MCF 10A (cell line): ENCODE measurements at regions of chr6 and their contacts with region 1.

Region 1: DNA sequence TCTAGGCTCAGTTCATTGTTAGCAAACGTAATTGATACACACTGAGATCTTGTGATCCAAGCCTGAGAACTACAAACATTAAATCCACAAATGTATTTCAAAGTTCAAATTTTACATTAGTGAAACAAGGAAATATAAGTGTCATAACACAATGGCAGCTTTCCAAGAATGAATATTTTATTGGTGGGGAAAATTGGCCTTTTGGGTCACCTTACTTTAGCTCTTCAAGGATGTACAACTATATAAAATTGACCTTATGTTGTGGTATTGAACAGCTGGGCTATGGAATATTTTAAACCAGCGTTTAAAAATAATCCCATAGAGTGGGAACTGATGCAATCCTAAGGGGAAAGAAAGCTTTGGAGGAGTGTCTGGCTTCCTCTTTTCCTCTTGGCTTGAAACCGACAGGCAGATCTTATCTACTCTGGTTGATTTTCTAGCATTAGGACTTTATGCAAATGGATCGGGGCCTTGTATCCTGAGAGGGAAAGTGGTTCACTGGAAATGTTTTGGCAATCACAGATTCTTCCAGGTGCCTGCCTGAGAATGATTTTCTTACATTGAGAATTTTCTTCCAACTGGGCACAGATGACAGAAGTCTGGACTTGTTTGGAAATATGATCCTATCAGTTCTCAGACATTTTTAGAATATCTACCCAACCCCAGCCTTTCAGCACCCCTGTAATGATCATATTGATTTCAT is 184.8 kb upstream of the ECI2 start:
- DNase-seq: peak; percentile 62
- H3K4me3 Mint-ChIP-seq: no peak overlapping the region
- H3K27ac Mint-ChIP-seq: peak overlapping the region; percentile 89
- H3K4me1 Mint-ChIP-seq: peaks cover 49% of the 10 kb centered on the region
- H3K27me3 Mint-ChIP-seq: no peaks in the 10 kb centered on the region
- CTCF ChIP-seq: no peak

Region 2: DNA sequence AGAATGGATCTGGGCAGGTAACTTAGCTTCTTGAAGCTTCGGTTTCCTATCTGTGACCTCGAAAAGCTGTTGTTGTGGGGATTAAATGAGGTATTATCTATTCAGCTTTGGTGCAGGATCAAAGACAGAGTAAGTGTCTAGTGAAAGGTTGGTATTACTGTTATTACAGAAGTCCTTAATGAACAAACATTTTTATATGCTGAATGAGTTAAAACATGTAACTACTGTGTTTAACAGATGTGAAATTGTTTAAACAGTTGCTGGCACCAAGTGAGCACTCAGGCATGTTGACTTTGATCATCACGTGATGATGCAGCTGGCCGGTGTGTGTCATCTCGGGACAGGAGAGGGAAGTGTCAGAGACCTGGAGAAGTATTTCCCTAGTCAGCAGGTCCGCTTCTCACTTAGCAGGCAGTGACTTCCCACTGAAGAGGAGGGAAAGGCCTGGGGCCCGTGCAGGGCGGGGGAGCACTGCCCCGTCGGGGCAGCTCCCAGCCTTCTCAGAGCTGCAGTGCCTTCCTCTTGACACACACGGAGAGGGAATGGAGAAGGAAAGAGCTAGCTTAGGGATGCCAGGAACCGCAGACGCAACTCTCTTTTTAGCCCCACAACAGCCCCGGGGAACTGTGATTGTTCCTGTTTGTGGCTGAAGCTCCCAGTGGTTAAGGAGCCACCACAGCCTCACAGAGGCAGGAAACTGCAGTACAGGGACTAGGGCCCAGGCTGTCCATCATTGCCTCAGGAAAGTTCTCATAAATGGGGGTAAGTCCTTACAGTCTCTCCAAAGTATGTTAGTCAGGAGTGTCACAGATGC is 1180.8 kb before region 1 on chr6:
- CTCF ChIA-PET with region 1: no interaction called
- POLR2A ChIA-PET with region 1: no interaction called
- intact Hi-C with region 1: no loop called
- DNase-seq: peak; percentile 56
- H3K4me3 Mint-ChIP-seq: no peak overlapping the region
- H3K27ac Mint-ChIP-seq: no peak overlapping the region
- H3K4me1 Mint-ChIP-seq: peaks cover 13% of the 10 kb centered on the region
- H3K27me3 Mint-ChIP-seq: no peaks in the 10 kb centered on the region
- CTCF ChIP-seq: no peak

Region 3: GRCh38 chr6:4351520-4352315 is 31.6 kb after region 1 on chr6:
- CTCF ChIA-PET with region 1: interaction called, 6 read pairs
- POLR2A ChIA-PET with region 1: interaction called, 19 read pairs
- intact Hi-C with region 1: no loop called
- DNase-seq: peak; percentile 89
- H3K4me3 Mint-ChIP-seq: peak overlapping the region; percentile 66
- H3K27ac Mint-ChIP-seq: peak overlapping the region; percentile 84
- H3K4me1 Mint-ChIP-seq: peaks cover 42% of the 10 kb centered on the region
- H3K27me3 Mint-ChIP-seq: no peaks in the 10 kb centered on the region
- CTCF ChIP-seq: no peak

Region 4: DNA sequence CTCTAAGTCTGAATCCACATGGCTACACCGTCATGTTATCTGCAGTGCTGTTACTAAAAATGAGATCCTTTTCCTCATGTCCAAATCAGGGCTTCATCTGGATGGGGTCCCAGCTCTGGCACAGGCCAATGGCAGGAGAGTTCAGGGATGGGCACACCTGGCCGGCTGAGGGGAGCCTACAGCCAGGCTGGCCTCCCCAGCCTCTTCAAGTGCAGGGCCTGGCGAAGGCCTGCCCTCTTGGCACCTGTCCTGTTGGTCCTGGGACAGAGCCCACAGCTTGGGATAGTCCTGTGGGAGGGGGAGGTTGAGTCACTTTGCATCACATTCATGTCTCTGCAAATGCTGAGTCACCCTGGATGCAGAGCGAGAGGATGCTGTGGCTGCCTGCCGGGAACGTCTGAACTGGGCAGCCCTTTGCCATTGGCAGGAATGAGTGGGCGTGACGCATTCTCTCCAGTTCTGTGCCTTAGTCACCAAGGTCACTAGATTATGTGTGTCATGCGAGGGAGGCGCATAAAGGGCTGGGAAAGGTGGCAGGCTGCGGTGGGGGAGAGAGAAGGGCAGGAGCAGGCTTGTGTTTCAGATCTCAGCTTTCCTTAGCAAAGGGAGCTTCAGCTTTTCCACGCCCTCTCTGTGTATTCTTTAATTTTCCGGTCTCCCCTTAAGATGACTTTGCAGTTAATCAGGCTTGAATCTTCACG is 38.4 kb after region 1 on chr6:
- CTCF ChIA-PET with region 1: interaction called, 3 read pairs
- POLR2A ChIA-PET with region 1: interaction called, 7 read pairs
- intact Hi-C with region 1: loop called (anchors 1 kb)
- DNase-seq: peak; percentile 100
- H3K4me3 Mint-ChIP-seq: peak overlapping the region; percentile 40
- H3K27ac Mint-ChIP-seq: peak overlapping the region; percentile 97
- H3K4me1 Mint-ChIP-seq: peaks cover 30% of the 10 kb centered on the region
- H3K27me3 Mint-ChIP-seq: no peaks in the 10 kb centered on the region
- CTCF ChIP-seq: no peak

Region 5: DNA sequence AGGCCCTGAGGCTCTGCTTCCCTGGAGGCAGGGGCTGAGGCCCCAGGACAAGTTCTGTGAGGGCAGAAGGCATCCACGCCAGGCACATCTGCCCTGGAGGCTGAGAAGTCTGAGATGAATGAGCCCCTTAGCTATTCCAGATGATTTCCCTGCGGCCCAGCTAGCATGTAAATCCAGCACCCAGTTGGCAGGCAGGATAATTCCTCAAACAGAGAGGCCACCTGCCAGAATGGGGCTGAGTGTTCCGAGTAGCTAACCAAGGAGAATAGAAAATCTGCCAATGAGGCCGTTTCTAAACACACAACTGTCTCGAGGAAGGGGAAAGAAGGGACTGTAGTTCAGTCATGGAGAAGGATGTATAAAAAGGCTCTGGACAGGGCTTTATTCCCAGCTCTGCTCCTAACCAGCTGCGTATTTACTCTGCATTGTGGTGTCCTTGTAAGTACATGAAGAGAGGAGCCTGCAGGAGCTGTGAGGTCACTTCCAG is 244.7 kb after region 1 on chr6:
- CTCF ChIA-PET with region 1: no interaction called
- POLR2A ChIA-PET with region 1: no interaction called
- intact Hi-C with region 1: no loop called
- DNase-seq: no peak
- H3K4me3 Mint-ChIP-seq: no peak overlapping the region
- H3K27ac Mint-ChIP-seq: no peak overlapping the region
- H3K4me1 Mint-ChIP-seq: no peaks in the 10 kb centered on the region
- H3K27me3 Mint-ChIP-seq: no peaks in the 10 kb centered on the region
- CTCF ChIP-seq: no peak